Lower lobe of right lung (tissue), 2 donors: ENCODE measurements at regions of chr2 and their contacts with region 1.

Region 1: GRCh38 chr2:168920504-168921157 is 19.5 kb downstream of the G6PC2 start:
- DNase-seq: no peak
- ATAC-seq: no peak
- H3K4me3 ChIP-seq: no peak overlapping the region
- H3K27ac ChIP-seq: no peak overlapping the region
- H3K4me1 ChIP-seq: no peaks in the 10 kb centered on the region
- H3K27me3 ChIP-seq: peaks cover 4% of the 10 kb centered on the region
- CTCF ChIP-seq: peak; percentile 62

Region 2: DNA sequence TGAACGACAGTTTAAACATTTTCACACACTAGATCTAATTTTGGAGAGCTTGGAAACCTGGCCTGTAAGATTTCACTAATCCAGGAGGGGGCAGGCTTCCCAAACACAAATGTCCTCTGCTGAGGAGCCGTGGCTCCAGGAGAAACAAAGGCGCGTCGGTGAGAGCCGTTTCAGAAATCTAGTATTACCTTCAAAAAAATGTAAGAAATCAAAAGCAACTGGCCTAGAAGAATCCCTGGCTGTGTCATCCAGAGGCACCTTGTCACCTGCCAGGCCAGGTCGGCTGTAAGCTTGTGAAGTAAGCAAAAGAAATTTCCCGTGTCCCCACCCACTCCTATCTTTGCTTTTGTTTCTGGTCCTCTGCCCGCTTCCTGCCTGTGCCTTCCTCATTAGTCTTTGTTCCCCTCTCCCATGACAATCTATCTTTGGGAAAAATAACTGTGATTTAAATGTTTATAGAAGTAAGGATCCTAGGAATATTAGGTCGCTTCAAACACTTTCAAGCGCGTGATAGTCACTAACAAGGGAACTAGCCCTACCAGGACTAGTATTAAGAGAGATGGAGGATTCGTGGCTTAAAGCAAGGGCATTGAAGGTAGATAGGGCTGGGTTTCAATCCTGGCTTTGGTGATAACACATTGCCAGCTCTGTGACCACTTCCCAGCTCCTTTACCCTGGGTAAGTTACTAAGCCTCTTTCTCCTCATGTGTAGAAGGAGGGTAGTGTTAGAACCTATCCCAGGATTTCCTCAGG is 573.7 kb before region 1 on chr2:
- intact Hi-C with region 1: loop called (anchors 10 kb)
- DNase-seq: peak; percentile 56
- ATAC-seq: peak; percentile 86 to 90
- H3K4me3 ChIP-seq: peak overlapping the region; percentile 53
- H3K27ac ChIP-seq: no peak overlapping the region
- H3K4me1 ChIP-seq: peaks cover 5% of the 10 kb centered on the region
- H3K27me3 ChIP-seq: no peaks in the 10 kb centered on the region
- CTCF ChIP-seq: peak; percentile 85

Region 3: DNA sequence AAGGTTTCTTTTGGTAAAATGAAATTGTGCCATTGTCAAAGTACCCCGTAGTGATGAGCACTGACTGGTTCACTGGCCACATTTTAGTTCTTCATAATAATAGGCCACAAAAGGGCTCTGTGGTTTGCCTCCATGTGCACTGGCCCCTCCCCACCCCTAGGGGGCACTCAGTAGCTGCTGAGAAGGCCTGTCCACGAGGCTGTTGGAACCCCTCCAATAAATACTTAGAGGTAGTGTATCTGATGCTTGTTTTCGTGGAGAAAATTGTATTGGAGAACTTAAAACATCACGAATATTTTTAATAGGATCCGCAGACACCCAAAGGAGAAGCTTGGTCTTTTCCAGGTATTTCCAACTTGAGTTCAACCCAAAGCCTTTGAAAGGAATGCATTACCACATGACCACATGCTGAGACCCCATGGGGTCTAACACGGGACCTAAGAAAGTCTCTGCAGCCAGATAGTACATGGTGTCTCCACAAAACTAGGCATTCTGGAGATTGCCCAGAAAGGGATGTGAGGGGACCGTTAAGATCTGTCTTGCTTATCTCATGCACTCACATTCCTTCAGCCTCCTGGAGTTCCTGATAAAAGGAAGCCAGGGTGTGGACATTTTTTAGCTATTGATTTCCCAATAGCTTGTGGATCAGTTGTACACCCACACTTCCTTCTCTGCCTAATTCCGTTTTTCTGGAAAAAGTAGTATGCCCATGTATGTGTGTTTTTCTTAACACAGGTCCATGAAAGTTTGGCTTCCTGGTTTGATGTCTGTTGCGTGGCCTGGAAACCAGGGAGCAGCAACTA is 146.7 kb before region 1 on chr2:
- intact Hi-C with region 1: loop called (anchors 10 kb)
- DNase-seq: peak; percentile 56
- ATAC-seq: peak; percentile 84 to 93
- H3K4me3 ChIP-seq: no peak overlapping the region
- H3K27ac ChIP-seq: no peak overlapping the region
- H3K4me1 ChIP-seq: peaks cover 4% of the 10 kb centered on the region
- H3K27me3 ChIP-seq: no peaks in the 10 kb centered on the region
- CTCF ChIP-seq: peak; percentile 83

Region 4: GRCh38 chr2:169827272-169828140 is 906.9 kb after region 1 on chr2 and contains the start of gene UBR3:
- intact Hi-C with region 1: no loop called
- DNase-seq: peak; percentile 95
- ATAC-seq: peak; percentile 92 to 96
- H3K4me3 ChIP-seq: peak within 1 kb of the TSS; percentile 94
- H3K27ac ChIP-seq: peak within 1 kb of the TSS; percentile 88
- H3K4me1 ChIP-seq: peaks cover 53% of the 10 kb centered on the region
- H3K27me3 ChIP-seq: no peaks in the 10 kb centered on the region
- CTCF ChIP-seq: peak; percentile 20
- total RNA-seq, gene UBR3: 46.7 TPM